Activated CD4-positive, alpha-beta memory T cell treated with anti-CD3 and anti-CD28 coated beads for 36 hours (primary cell): ENCODE measurements at regions of chr14 and their contacts with region 1.

Region 1: GRCh38 chr14:70714055-70714621 is 72.4 kb downstream of the TTC9 start:
- DNase-seq: peak; percentile 32
- H3K4me3 Mint-ChIP-seq: no peak overlapping the region
- H3K27ac Mint-ChIP-seq: no peak overlapping the region
- H3K4me1 Mint-ChIP-seq: peaks cover 3% of the 10 kb centered on the region
- H3K27me3 Mint-ChIP-seq: no peaks in the 10 kb centered on the region

Region 2: DNA sequence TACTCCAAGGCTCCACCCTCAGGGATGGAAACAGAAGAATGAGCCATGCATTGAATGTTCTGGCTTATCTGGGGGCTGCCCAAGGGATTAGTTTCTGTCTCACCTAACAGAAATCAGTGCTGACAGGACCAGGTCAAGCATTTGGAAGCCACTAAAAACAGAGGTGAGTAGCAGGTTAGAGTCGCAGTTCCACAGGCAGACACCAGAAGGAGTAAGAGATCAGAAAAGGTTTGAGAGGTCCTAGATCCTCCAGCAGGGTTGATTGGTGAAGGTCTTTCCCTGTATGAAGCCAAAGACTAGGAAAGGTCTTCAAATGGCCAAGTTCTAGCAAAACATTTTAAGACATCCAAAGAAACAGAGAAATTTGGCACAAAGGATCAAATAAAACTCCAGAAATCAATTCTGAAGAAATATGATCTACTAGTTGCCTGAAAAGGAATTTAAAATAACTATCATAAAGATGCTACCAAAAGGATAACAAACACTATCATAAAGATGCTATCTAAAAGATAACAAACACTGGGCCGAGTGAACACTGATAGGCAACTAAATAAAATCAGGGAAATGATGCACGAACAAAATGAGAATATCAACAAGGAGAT is 91.9 kb before region 1 on chr14:
- CTCF ChIA-PET with region 1: interaction called, 59 read pairs
- POLR2A ChIA-PET with region 1: no interaction called
- intact Hi-C with region 1: loop called (anchors 2 kb)
- DNase-seq: peak; percentile 61
- H3K4me3 Mint-ChIP-seq: no peak overlapping the region
- H3K27ac Mint-ChIP-seq: no peak overlapping the region
- H3K4me1 Mint-ChIP-seq: no peaks in the 10 kb centered on the region
- H3K27me3 Mint-ChIP-seq: no peaks in the 10 kb centered on the region

Region 3: DNA sequence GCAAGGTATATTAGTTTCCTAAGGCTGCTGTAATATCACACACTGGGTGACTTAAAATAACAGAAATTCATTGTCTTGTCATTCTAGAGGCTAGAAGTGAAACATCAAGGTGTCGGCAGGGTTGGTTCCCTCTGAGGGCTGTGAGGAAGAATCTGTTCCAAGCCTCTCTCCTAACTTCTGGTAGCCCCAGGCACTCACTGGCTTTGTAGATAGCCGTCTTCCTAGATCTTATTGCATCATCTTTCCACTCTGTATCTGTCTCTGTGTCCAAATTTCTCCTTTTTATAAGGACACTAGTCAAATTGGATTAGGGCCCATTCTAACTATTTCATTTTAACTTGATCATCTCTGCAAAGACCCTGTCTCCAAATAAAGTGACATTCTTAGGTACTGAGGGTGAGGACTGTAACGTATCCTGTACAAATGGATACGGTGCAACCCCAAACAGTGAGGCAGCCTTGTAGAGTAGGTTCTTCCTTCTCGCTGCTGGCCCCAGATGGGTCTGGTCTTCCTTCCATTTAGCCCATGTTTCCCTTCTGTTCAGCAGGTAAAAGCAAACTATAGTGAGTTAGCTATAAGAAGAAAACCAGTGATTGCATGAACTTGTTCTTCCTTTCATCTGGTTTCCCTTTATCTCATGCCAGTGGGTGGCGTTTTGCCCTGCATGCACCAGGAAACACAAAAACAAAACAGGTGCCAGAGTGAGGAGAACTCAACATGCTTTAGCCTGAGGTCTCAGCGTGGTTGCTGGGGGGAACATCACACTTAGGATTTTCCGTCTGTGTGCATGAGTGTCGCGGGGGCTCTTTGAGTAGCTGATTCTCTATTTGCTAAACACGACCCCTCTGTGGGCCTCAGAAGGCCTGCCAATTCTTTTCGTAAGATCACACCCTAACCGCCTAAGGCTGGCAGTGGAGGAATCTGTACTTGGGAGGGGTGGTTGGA is 52.9 kb before region 1 on chr14:
- CTCF ChIA-PET with region 1: interaction called, 3 read pairs
- POLR2A ChIA-PET with region 1: interaction called, 3 read pairs
- intact Hi-C with region 1: loop called (anchors 1 kb)
- DNase-seq: peak; percentile 71
- H3K4me3 Mint-ChIP-seq: peak overlapping the region; percentile 45
- H3K27ac Mint-ChIP-seq: peak overlapping the region; percentile 83
- H3K4me1 Mint-ChIP-seq: peaks cover 82% of the 10 kb centered on the region
- H3K27me3 Mint-ChIP-seq: no peaks in the 10 kb centered on the region

Region 4: DNA sequence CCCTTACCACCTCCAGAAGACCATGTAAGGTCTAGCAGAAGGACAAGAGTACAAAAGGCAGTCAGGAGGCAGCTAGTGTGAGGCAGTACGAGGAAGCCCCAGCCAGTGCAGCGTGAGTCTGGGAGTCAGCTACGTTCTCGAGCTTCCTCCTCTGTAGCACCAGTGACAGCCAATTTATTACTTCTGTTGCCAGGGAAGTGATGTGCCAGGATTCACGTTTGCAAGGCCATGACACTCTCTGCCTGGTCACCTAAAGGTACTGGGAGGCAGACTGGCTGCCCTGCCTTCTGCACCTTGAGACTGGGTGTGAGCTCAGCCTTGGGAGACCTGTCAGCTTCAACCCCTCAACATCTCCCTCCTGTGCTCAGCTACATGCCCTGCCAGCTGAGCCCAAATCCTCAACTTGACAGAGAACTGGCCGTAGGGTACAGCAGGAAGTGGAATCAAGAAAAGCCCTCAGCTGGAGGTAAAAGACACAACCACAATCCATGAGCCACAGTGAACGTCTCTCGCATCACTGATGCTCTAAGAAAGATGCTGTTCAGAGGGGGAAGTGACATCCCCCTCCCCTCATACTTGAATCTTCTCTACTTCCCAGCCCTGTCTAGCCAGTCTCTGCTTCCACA is 1035.6 kb after region 1 on chr14:
- CTCF ChIA-PET with region 1: no interaction called
- POLR2A ChIA-PET with region 1: no interaction called
- intact Hi-C with region 1: no loop called
- DNase-seq: no peak
- H3K4me3 Mint-ChIP-seq: no peak overlapping the region
- H3K27ac Mint-ChIP-seq: no peak overlapping the region
- H3K4me1 Mint-ChIP-seq: no peaks in the 10 kb centered on the region
- H3K27me3 Mint-ChIP-seq: peaks cover 2% of the 10 kb centered on the region